ENCODE measurements at regions of chr12 and their contacts with region 1.

Region 1: GRCh38 chr12:46124848-46125619 is 134.7 kb upstream of the SCAF11 start:
- DNase-seq: no peak
- ATAC-seq: peak; percentile 93
- H3K4me3 Mint-ChIP-seq: peak overlapping the region; percentile 67
- H3K27ac Mint-ChIP-seq: peak overlapping the region; percentile 72
- H3K4me1 Mint-ChIP-seq: peaks cover 5% of the 10 kb centered on the region
- H3K27me3 Mint-ChIP-seq: peaks cover 5% of the 10 kb centered on the region
- CTCF ChIP-seq: peak; percentile 75

Region 2: GRCh38 chr12:46071769-46072624 is 53.0 kb before region 1 on chr12:
- CTCF ChIA-PET with region 1: interaction called, 52 read pairs
- POLR2A ChIA-PET with region 1: no interaction called
- intact Hi-C with region 1: loop called (anchors 1 kb)
- DNase-seq: peak; percentile 39
- ATAC-seq: peak; percentile 96
- H3K4me3 Mint-ChIP-seq: no peak overlapping the region
- H3K27ac Mint-ChIP-seq: peak overlapping the region; percentile 61
- H3K4me1 Mint-ChIP-seq: peaks cover 12% of the 10 kb centered on the region
- H3K27me3 Mint-ChIP-seq: peaks cover 4% of the 10 kb centered on the region
- CTCF ChIP-seq: peak; percentile 88

Region 3: GRCh38 chr12:46303039-46303666 is 178.1 kb after region 1 on chr12:
- CTCF ChIA-PET with region 1: interaction called, 69 read pairs
- POLR2A ChIA-PET with region 1: no interaction called
- intact Hi-C with region 1: loop called (anchors 1 kb)
- DNase-seq: no peak
- ATAC-seq: peak; percentile 74
- H3K4me3 Mint-ChIP-seq: no peak overlapping the region
- H3K27ac Mint-ChIP-seq: peak overlapping the region; percentile 20
- H3K4me1 Mint-ChIP-seq: peaks cover 31% of the 10 kb centered on the region
- H3K27me3 Mint-ChIP-seq: no peaks in the 10 kb centered on the region
- CTCF ChIP-seq: peak; percentile 30

Region 4: DNA sequence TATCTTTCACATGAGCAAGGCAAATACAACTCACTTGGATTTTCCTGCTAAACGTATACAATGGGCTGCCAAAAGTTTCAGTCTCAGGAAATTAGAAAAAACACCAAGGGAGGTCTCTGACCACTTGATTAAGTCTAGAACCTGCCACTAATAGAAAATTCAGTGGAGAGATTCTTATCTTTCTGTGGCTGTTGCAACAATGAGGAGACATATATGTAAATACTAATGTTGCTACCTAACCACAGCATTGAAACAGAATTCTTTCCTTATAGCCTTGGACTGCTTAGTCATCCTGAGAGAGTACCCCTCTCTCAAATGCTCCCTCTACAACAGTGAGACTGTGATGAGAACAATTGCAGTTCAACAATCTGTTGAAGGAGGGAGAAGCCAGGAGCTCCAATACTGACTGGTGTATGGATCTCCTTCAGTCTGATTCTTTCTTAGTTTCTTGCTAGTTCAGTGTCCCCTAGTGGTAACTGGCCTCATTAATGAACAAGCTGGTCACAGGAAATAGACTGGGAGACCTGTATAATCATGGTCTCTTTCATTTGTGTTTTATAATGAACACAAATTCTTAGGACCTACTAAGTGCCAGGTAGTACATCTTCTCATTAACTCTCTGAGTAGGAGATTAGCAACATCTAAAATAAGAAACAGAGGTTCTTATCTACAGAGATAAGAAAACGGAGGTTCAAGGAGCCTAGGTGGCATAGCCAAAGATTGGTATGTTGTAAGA is 536.2 kb after region 1 on chr12:
- CTCF ChIA-PET with region 1: interaction called, 22 read pairs
- POLR2A ChIA-PET with region 1: no interaction called
- intact Hi-C with region 1: loop called (anchors 1 kb)
- DNase-seq: no peak
- ATAC-seq: peak; percentile 94
- H3K4me3 Mint-ChIP-seq: peak overlapping the region; percentile 3
- H3K27ac Mint-ChIP-seq: no peak overlapping the region
- H3K4me1 Mint-ChIP-seq: peaks cover 31% of the 10 kb centered on the region
- H3K27me3 Mint-ChIP-seq: no peaks in the 10 kb centered on the region
- CTCF ChIP-seq: no peak

Region 5: DNA sequence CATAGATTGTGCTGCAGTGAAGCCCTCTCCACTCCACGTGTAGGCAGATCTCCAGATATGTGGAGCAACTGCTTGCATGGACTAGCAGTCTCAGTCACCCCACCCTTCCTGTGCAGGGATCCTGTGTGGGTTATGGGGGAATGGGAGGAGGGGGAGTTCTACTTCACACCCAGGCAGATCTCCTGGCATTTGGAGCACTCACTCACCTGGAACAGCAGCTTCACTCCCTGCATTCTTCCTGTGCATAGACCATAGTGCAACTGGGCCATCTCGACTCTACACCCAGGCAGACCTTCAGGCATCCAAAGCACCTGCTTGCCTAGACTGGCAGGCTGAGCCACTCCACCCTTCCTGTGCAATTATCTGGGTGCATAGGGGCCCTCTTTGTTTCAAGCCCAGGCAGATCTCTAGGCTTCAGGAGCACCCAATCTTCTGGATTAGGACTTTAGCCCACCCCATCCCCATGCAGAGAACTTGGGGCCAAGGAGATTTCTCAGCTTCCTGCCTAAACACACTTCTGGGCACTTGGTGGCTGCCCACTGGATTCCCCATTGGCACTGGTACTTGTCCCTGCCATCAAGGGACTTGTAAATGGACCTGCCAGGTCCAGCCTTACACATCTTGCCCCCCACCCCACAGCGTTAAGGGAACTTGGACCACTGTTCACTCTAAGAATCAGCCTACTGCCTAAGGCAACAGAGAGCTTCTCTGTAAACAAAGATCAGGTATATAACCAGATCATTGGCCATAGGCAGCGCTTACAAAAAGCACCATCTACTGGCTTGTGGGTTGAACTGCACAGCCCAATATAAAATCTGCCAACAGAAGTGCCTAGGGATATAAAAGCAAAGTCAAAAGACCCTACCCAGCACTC is 858.6 kb after region 1 on chr12:
- CTCF ChIA-PET with region 1: interaction called, 22 read pairs
- POLR2A ChIA-PET with region 1: no interaction called
- intact Hi-C with region 1: loop called (anchors 1 kb)
- DNase-seq: no peak
- ATAC-seq: peak; percentile 56
- H3K4me3 Mint-ChIP-seq: no peak overlapping the region
- H3K27ac Mint-ChIP-seq: no peak overlapping the region
- H3K4me1 Mint-ChIP-seq: peaks cover 7% of the 10 kb centered on the region
- H3K27me3 Mint-ChIP-seq: peaks cover 14% of the 10 kb centered on the region
- CTCF ChIP-seq: peak; percentile 28

Measured in activated B cell treated with CpG ODN at 0.5 μM for 24 hours (primary cell).